ENCODE measurements at regions of chr3 and their contacts with region 1.

Region 1: DNA sequence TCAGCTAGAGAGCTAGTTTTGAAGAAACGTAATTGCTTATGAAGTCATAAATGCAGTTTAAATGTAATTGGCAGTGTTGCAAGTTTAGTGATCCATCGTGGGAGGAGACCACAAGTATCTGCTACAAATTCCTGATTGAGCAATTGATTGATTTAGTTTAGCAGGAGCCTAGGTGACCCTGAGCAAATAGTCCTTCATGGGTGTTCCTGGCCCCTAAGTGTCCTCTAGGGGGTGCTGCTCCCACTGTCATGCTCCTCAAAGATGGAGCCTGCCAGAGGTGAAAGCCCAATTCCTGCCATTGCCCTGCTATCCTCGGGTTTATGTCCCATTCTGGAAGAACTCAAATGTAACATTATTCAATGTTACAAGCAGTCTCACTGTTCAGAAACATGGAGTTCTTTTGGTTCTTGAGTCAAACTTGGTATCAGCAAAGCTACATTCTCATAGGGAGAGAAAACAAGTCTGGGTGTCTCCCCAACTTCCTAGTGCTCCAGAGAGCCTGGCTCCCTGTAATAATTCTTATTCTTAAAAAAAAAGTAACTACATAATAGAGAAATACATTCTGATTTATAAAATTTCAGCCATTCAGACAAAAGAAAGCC is 29.8 kb upstream of the SENP5 start:
- DNase-seq: peak; percentile 74 to 75
- H3K4me3 ChIP-seq: no peak overlapping the region
- H3K27ac ChIP-seq: no peak overlapping the region
- H3K4me1 ChIP-seq: no peaks in the 10 kb centered on the region
- H3K27me3 ChIP-seq: no peaks in the 10 kb centered on the region
- CTCF ChIP-seq: peak in 5 of 7 experiments; percentile 57 to 74 (median 61)
- EP300 ChIP-seq: no peak
- POLR2A ChIP-seq: no peak

Region 2: DNA sequence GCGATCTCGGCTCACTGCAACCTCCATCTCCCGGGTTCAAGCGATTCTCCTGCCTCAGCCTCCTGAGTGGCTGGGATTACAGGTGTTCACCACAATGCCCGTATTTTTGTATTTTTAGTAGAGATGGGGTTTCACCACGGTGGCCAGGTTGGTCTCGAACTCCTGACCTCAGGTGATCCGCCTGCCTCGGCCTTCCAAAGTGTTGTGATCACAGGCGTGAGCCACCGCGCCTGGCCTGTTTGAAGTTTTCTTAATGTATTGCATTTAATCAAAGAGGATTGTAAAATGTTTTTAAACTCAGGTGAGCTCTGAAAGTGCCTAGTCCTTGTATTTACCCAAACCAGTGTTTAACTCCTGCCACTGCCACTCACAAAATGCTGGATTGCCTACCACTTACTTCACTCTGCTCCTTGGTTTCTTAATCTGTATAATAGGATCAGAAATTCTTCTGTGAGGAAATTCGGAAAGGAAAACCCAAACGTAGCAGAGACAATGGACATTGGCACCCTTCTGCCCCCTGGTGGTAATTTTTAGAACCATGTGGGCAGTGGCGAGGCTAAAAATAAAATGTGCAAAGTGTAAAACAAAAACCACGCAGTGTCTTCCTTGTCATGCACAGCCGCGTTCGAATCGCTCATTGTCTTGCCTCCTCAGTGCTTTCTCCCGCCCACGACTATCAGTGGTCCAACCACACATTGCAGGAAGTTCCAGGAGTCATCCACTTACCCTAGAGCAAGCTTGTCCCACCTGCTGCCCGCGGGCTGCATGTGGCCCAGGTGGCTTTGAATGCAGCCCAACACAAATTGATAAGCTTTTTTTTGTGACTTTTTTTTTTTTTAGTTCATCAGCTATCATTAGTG is 153.1 kb before region 1 on chr3:
- intact Hi-C with region 1: no loop called
- DNase-seq: peak; percentile 64 to 87
- H3K4me3 ChIP-seq: peak overlapping the region in 2 of 4 donors; percentile 7 to 8
- H3K27ac ChIP-seq: no peak overlapping the region
- H3K4me1 ChIP-seq: peaks cover 5 to 11% (median 8%) of the 10 kb centered on the region in 4 donors
- H3K27me3 ChIP-seq: no peaks in the 10 kb centered on the region
- CTCF ChIP-seq: peak in 5 of 7 experiments; percentile 75 to 91 (median 84)
- EP300 ChIP-seq: no peak
- POLR2A ChIP-seq: no peak

Region 3: DNA sequence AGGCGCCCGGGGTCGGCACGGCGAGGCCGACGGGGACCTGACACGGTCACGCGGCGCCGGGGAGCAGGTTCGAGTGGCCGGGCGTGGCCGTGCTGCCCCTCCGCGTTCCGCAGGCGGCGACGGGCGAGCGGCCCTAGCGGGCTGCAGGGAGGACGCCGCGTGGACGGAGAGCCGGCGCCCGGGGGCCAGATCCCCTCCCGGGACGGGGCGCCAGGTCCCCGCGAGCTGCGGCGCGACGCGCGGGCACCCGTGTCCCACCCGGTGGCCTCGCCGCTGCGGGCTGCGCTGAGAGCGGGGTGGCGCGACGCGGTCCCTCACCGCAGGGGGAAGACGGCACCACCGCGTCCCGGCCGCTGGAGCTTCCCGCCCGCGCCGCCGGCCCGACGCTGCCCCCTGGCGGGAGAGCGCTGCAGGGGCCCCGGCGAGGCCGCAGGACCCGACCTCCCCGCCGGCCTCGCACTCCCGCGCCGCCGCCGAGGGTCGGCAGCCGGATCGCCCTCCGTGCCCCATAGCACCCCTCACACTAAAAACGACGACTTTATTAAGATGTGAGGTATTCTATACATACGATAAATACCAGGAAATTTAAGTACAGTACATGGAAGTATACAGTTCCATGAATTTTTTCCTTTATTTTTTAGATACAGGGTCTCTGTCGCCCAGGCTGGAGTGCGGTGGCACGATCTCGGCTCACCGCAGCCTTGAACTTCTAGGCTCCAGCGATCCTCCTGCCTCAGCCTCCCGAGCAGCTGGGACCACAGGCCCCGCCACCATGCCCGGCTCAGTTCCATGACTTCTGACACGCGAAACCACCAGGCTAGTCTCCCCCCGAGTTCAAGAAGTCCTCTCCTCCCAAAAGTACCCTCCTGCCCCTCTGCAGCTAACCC is 132.0 kb after region 1 on chr3:
- intact Hi-C with region 1: loop called (anchors 10 kb)
- DNase-seq: peak; percentile 69 to 89
- H3K4me3 ChIP-seq: peak overlapping the region; percentile 78 to 97 (median 86)
- H3K27ac ChIP-seq: peak overlapping the region; percentile 76 to 87 (median 82)
- H3K4me1 ChIP-seq: peaks cover 7 to 42% (median 25%) of the 10 kb centered on the region in 4 donors
- H3K27me3 ChIP-seq: no peaks in the 10 kb centered on the region
- CTCF ChIP-seq: peak in 4 of 7 experiments; percentile 25 to 95 (median 89)
- EP300 ChIP-seq: no peak
- POLR2A ChIP-seq: no peak